ENCODE measurements at regions of chr17 and their contacts with region 1.

Region 1: DNA sequence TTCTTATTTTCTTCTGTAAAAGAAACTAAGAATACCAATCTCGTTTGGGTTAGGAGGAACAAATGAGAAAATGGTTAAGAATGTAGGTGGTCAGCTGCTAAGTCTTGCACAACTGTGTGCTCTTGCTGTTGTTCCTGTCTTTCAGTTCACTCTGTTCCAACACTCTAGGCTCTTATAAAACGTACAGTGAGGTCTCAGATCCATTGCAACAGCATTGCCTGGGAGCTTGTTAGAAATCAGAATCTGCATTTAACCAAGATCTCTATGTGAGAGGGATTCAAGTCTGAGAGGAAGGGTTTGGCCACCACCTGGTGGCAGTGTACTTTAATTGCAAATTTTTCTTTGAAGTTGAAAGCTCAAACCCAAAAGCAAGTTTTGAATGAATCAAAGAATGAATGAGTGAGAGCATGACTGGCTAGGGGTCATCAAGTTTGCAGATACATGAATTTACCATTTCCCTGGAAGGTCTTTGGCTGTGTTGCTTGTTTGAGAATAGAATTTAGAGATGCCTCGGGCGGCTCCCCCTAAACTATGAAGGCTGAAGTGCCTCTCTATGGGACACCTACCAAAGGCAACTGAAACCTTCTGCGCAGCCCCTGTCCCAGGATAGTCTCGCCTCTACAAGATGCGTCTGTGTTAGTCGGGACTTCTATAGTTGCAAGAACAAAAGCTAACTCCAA is 2.5 kb downstream of the ALOX15B start:
- DNase-seq: no peak
- ATAC-seq: peak in 7 of 8 donors; percentile 30 to 88 (median 66)
- H3K4me3 ChIP-seq: no peak overlapping the region
- H3K27ac ChIP-seq: peak overlapping the region in 1 of 10 donors; percentile 51
- H3K4me1 ChIP-seq: peaks cover 0 to 28% (median 4%) of the 10 kb centered on the region in 9 donors
- H3K27me3 ChIP-seq: peaks cover 0 to 44% (median 34%) of the 10 kb centered on the region in 7 donors
- CTCF ChIP-seq: peak; percentile 29 to 71 (median 66)

Region 2: DNA sequence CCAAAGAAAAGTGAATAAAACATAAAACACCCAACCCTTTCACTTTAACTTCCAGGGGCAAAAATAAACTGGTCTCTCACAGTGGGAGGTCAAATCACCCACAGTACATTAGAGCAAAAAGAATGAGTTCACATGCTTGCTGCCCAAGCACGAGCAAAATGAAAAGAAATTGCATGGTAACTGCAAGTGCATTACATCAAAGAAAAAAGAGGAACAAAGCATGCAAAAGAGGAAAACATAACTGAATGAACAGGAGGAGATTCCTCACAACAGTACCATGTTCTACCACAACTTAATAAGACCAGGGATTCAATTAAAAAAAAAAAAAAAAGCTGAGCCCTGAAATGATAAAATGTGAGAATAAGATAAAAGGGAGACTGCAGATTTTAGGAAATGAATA is 311.6 kb before region 1 on chr17:
- intact Hi-C with region 1: loop called in 1 of 10 experiments (anchors 10 kb)
- DNase-seq: no peak
- ATAC-seq: no peak
- H3K4me3 ChIP-seq: no peak overlapping the region
- H3K27ac ChIP-seq: no peak overlapping the region
- H3K4me1 ChIP-seq: peaks cover 0 to 4% (median 0%) of the 10 kb centered on the region in 9 donors
- H3K27me3 ChIP-seq: peaks cover 0 to 14% (median 0%) of the 10 kb centered on the region in 7 donors
- CTCF ChIP-seq: no peak

Region 3: DNA sequence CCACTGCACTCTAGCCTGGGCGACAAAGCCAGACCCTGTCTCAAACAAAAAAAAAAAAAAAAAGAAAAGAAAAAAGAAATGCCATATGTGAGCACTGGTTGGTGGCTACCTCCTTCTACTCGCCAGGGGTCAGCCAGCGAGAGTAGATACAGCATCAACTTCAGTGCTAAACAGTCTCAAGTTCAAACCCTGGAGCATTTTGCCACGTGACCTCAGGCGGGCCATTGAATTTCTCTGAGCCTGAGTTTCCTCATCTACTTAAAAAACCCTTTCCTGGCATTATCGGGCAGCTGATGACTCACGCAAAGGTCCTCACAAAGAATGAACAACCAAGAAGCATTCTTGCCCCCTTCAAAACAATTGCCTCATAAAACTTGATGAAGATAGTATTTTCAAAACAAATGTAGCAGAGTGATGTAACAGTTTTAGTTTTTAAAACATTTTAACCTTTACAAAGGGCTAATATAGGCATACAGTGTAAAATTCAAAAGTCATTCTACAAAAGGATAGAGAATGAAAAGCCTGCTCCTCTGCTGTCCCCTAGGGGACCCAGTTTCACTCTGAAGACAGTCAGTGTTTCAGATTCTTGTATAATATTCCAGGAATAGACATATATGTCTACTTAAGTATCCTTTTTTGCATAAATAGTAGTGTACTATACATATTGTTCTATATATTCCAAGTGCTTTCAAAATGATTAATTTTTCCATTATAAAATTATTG is 295.5 kb before region 1 on chr17:
- intact Hi-C with region 1: loop called in 2 of 10 experiments (anchors 5 to 10 kb)
- DNase-seq: no peak
- ATAC-seq: peak in 1 of 8 donors; percentile 37
- H3K4me3 ChIP-seq: no peak overlapping the region
- H3K27ac ChIP-seq: no peak overlapping the region
- H3K4me1 ChIP-seq: peaks cover 0 to 18% (median 8%) of the 10 kb centered on the region in 9 donors
- H3K27me3 ChIP-seq: peaks cover 0 to 18% (median 9%) of the 10 kb centered on the region in 7 donors
- CTCF ChIP-seq: peak in 1 of 9 donors; percentile 8

Region 4: DNA sequence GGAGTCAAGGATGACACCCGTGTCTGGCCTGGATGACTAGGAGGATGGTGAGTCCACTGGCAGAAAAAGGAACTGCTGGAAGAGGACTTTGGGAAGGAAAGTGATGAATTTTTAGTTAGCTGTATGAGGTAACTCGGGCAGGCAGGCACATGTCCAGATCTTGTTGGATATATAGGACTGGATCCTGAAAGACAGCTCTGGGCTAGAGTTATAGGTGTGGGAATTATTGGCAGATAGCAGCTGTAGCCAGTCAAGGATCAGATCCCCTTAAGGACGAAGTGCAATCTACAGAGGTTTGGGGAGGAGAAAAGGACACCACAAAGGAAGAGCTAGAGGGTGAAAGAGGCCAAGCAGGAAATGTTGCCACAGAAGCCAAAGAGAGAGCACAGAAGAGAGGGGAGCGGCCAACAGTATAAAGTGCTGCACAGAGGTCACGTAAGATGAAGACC is 173.5 kb before region 1 on chr17:
- intact Hi-C with region 1: loop called in 4 of 10 experiments (anchors 5 to 10 kb)
- DNase-seq: no peak
- ATAC-seq: no peak
- H3K4me3 ChIP-seq: no peak overlapping the region
- H3K27ac ChIP-seq: peak overlapping the region in 1 of 10 donors; percentile 3
- H3K4me1 ChIP-seq: peaks cover 0 to 15% (median 0%) of the 10 kb centered on the region in 9 donors
- H3K27me3 ChIP-seq: no peaks in the 10 kb centered on the region
- CTCF ChIP-seq: no peak

Region 5: GRCh38 chr17:7915611-7916382 is 125.6 kb before region 1 on chr17 and contains the start of gene RNF227:
- intact Hi-C with region 1: loop called in 9 of 10 experiments (anchors 2 to 10 kb)
- DNase-seq: peak; percentile 91 to 94
- ATAC-seq: peak; percentile 88 to 93 (median 91)
- H3K4me3 ChIP-seq: peak within 1 kb of the TSS; percentile 49 to 93 (median 65)
- H3K27ac ChIP-seq: peak within 1 kb of the TSS; percentile 70 to 98 (median 92)
- H3K4me1 ChIP-seq: peaks cover 3 to 35% (median 26%) of the 10 kb centered on the region in 9 donors
- H3K27me3 ChIP-seq: no peaks in the 10 kb centered on the region
- CTCF ChIP-seq: no peak
- total RNA-seq, gene RNF227: 0.15 to 1.6 (median 0.90) TPM